ENCODE measurements at regions of chr5 and their contacts with region 1.

Region 1: DNA sequence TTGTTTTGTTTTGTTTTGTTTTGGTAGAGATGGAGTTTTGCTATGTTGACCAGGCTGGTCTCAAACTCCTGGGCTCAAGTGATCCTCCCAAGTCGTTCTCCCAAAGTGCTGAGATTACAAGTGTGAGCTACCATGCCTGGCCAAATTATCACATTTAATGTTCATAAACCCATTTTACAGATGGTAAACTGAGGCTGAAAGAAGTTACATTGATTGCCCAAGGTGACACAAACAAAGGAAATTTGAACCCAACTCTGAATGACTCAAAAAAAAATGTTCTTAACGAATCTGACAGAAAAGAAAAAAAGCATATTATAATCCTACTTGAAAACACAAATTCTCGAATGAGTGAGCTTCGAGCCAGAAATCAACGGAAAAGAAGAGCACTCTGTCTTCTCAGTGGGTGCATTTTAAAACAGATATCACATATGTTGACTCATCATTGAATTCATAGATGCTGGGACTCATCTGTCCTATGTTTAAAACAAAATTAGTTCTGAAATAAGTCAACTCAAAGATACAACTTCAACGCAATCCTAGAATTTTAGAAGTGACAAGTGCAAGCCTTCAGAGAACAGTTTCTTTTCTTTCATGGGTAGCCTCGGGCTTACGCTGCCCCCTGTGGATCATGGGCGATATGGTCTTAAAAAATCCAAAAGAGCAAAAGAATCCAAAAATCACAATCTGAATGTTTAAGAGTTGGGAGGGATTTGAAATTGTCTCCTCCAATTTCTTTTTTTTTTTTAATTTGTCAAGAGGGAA is 28.4 kb downstream of the TIMD4 start:
- DNase-seq: peak; percentile 45 to 56 (median 50)
- H3K4me3 ChIP-seq: no peak overlapping the region
- H3K4me3 Mint-ChIP-seq: peak overlapping the region in 7 of 8 donors; percentile 49 to 69 (median 58)
- H3K27ac ChIP-seq: no peak overlapping the region
- H3K27ac Mint-ChIP-seq: peak overlapping the region in 5 of 7 donors; percentile 6 to 72 (median 30)
- H3K4me1 ChIP-seq: peaks cover under 1% of the 10 kb centered on the region
- H3K4me1 Mint-ChIP-seq: peaks cover 6 to 20% (median 12%) of the 10 kb centered on the region in 4 donors
- H3K27me3 ChIP-seq: no peaks in the 10 kb centered on the region
- H3K27me3 Mint-ChIP-seq: no peaks in the 10 kb centered on the region

Region 2: DNA sequence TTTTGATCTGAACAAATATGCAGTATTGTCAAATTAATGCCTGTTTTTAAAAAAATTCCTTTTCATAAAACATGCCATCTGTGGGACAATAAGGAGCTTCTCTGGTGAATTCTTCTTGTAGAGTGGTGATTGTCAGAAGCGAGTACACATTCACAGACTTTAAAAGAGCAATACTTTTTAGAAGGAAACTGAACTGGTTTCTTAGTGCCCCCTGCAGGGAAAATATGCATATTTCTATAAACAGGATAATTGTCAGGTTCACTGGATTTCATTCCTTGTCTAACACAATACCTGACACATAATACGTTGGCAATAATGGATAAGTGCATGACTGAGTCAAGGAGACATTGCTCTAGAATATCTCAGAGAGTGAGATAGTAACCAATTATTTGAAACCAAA is 1787.4 kb before region 1 on chr5:
- CTCF ChIA-PET with region 1: no interaction called
- POLR2A ChIA-PET with region 1: no interaction called
- intact Hi-C with region 1: loop called (anchors 10 kb)
- DNase-seq: no peak
- H3K4me3 ChIP-seq: no peak overlapping the region
- H3K4me3 Mint-ChIP-seq: no peak overlapping the region
- H3K27ac ChIP-seq: no peak overlapping the region
- H3K27ac Mint-ChIP-seq: no peak overlapping the region
- H3K4me1 ChIP-seq: no peaks in the 10 kb centered on the region
- H3K4me1 Mint-ChIP-seq: peaks cover 0 to 8% (median under 1%) of the 10 kb centered on the region in 4 donors
- H3K27me3 ChIP-seq: no peaks in the 10 kb centered on the region
- H3K27me3 Mint-ChIP-seq: peaks cover 0 to 8% of the 10 kb centered on the region in 2 donors

Region 3: DNA sequence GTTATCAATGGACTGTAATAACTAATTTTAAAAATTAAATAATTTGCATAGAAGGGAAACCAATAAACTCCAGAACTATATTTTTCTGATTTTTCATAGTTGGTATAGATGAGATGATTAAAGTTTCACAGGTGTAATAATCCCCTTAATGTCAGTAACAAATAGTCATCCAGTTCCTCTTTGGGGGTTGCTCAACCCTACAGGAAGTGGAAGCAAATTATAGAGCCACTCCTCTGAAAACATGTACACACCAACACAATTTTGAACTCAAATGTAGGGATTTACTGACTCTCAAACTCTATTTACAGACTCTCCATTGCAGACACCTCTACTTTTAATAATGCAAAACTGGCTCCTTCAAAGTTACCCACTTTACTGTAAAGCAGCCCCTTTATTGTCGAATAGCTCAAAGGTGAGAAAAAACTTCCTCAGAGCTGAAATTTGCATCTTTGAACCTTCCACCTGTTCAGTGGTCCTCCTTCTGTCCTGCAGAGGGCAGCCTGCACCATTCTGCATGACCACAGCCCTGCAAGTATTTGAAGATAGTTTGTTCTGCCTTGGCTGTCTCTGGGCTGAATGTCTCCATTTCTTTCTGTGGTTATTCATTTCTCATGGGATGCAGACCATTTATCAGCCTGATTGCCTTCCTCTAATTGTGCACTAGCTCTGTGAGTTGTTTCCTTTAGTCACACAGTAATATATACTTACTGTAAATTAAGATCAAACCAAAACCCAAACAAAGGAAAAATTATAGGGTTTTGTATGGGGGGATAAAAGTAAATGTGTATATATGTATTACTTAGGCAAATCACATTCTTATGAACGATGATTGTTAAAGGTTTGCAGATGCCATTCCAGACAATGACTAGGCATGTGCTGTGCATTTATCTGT is 990.9 kb before region 1 on chr5:
- CTCF ChIA-PET with region 1: no interaction called
- POLR2A ChIA-PET with region 1: no interaction called
- intact Hi-C with region 1: loop called (anchors 2 kb)
- DNase-seq: peak; percentile 4 to 43 (median 10)
- H3K4me3 ChIP-seq: no peak overlapping the region
- H3K4me3 Mint-ChIP-seq: no peak overlapping the region
- H3K27ac ChIP-seq: no peak overlapping the region
- H3K27ac Mint-ChIP-seq: peak overlapping the region in 1 of 7 donors; percentile 12
- H3K4me1 ChIP-seq: no peaks in the 10 kb centered on the region
- H3K4me1 Mint-ChIP-seq: peaks cover 0 to 3% (median 0%) of the 10 kb centered on the region in 4 donors
- H3K27me3 ChIP-seq: no peaks in the 10 kb centered on the region
- H3K27me3 Mint-ChIP-seq: peaks cover 0 to 2% of the 10 kb centered on the region in 2 donors

Region 4: GRCh38 chr5:156698323-156698722 is 236.3 kb before region 1 on chr5:
- CTCF ChIA-PET with region 1: no interaction called
- POLR2A ChIA-PET with region 1: no interaction called
- intact Hi-C with region 1: no loop called
- DNase-seq: no peak
- H3K4me3 ChIP-seq: no peak overlapping the region
- H3K4me3 Mint-ChIP-seq: no peak overlapping the region
- H3K27ac ChIP-seq: no peak overlapping the region
- H3K27ac Mint-ChIP-seq: no peak overlapping the region
- H3K4me1 ChIP-seq: no peaks in the 10 kb centered on the region
- H3K4me1 Mint-ChIP-seq: no peaks in the 10 kb centered on the region
- H3K27me3 ChIP-seq: no peaks in the 10 kb centered on the region
- H3K27me3 Mint-ChIP-seq: peaks cover 5 to 11% of the 10 kb centered on the region in 2 donors

Region 5: DNA sequence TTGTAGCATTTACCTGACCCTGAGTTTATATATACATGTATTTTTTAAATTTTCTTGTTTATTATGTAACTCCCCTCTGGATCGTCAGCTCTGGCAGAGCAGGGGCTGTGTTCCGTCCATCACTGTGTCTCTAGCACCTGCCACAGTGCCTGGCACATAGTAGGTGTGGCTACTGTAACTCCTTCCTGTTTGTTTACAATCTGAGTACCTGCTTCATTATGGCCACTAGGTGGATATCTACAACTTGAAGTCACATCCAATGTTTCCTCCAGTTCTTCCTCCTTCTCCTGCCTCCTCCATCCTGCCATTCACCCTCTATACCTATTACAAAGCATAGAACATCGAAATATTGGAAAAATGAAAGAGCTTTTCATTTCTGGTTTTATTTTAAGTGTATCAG is 98.7 kb before region 1 on chr5:
- CTCF ChIA-PET with region 1: interaction called, 10 read pairs
- POLR2A ChIA-PET with region 1: no interaction called
- intact Hi-C with region 1: loop called (anchors 5 kb)
- DNase-seq: no peak
- H3K4me3 ChIP-seq: no peak overlapping the region
- H3K4me3 Mint-ChIP-seq: no peak overlapping the region
- H3K27ac ChIP-seq: no peak overlapping the region
- H3K27ac Mint-ChIP-seq: peak overlapping the region in 1 of 7 donors; percentile 4
- H3K4me1 ChIP-seq: no peaks in the 10 kb centered on the region
- H3K4me1 Mint-ChIP-seq: no peaks in the 10 kb centered on the region
- H3K27me3 ChIP-seq: no peaks in the 10 kb centered on the region
- H3K27me3 Mint-ChIP-seq: peaks cover 1 to 3% of the 10 kb centered on the region in 2 donors

Region 6: DNA sequence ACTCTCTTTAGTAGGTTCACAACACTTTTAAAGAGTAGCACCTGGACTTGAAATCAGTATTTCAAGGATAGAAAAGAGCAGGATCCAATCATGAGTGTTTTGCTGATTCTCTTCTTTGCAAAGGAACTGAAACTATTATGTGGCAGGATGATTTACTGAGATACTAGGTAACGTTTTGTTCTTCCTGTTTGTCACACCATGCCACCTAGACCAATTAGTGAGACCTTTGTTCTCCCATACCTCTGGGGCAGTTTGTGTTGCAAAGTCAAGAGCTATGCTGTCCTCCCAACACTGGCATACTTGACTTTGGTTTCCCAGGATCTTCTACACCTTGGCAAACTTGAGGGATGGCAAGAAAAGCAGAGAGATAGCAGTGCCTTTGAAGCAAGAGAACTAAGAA is 41.1 kb before region 1 on chr5:
- CTCF ChIA-PET with region 1: interaction called, 27 read pairs
- POLR2A ChIA-PET with region 1: no interaction called
- intact Hi-C with region 1: loop called (anchors 1 kb)
- DNase-seq: no peak
- H3K4me3 ChIP-seq: no peak overlapping the region
- H3K4me3 Mint-ChIP-seq: no peak overlapping the region
- H3K27ac ChIP-seq: no peak overlapping the region
- H3K27ac Mint-ChIP-seq: peak overlapping the region in 1 of 7 donors; percentile 11
- H3K4me1 ChIP-seq: peaks cover 8% of the 10 kb centered on the region
- H3K4me1 Mint-ChIP-seq: peaks cover 9 to 27% (median 19%) of the 10 kb centered on the region in 4 donors
- H3K27me3 ChIP-seq: no peaks in the 10 kb centered on the region
- H3K27me3 Mint-ChIP-seq: peaks cover 0 to 1% of the 10 kb centered on the region in 2 donors

Region 7: DNA sequence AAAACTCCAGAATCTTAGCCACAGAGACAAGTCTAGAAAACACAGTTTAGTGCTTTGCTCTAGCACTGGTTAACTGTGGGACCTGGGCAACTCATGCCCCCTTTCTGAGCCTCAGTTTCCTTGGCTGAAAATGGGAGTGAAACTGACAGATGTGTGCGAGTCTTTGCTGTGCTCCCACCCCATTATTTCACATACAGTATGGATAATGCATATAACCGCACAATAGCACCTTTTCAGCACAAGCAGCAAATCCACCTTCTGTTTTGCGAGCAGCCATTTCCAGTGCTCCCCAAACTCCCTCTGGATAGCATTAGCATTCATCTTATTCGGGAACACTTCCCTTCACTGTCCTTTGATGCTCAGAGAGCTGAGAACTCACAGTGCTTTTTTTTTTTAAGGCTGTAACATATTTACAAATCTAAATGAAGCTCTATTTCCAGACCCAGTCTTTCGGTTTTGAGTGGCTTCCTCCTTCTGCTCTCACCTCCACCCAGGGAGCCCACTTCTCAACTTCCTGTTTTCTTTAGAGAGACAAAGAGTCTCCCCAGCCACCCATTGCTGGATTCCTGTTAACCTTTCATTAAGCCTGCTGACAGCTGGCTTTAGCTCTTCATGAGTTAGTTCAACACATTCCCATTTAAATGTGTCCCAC is 20.8 kb before region 1 on chr5:
- CTCF ChIA-PET with region 1: interaction called, 25 read pairs
- POLR2A ChIA-PET with region 1: interaction called, 4 read pairs
- intact Hi-C with region 1: no loop called
- DNase-seq: peak; percentile 34 to 43 (median 36)
- H3K4me3 ChIP-seq: peak overlapping the region in 1 of 2 donors; percentile 18
- H3K4me3 Mint-ChIP-seq: peak overlapping the region; percentile 76 to 90 (median 80)
- H3K27ac ChIP-seq: peak overlapping the region; percentile 36
- H3K27ac Mint-ChIP-seq: peak overlapping the region; percentile 82 to 95 (median 92)
- H3K4me1 ChIP-seq: peaks cover 28% of the 10 kb centered on the region
- H3K4me1 Mint-ChIP-seq: peaks cover 24 to 52% (median 38%) of the 10 kb centered on the region in 4 donors
- H3K27me3 ChIP-seq: no peaks in the 10 kb centered on the region
- H3K27me3 Mint-ChIP-seq: no peaks in the 10 kb centered on the region

Region 8: DNA sequence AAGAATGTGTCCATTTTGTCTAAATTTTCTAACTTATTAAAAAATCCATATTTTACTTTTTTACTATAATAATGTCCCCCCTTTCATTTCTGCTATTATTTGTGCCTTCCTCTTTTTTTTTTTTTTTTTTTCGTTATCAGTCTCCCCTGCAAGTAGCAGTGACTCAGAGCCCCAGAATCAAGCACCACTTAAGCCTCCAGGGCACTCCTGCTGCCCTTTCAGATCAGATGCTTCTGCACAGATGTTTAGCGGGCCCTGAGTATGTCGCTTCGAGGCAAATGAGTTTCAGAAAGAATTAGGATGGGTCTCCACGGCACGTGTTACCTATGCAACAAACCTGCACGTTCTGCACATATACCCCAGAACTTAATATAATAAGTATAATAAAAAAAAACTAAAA is 196.3 kb after region 1 on chr5:
- CTCF ChIA-PET with region 1: interaction called, 17 read pairs
- POLR2A ChIA-PET with region 1: no interaction called
- intact Hi-C with region 1: loop called (anchors 10 kb)
- DNase-seq: no peak
- H3K4me3 ChIP-seq: no peak overlapping the region
- H3K4me3 Mint-ChIP-seq: no peak overlapping the region
- H3K27ac ChIP-seq: no peak overlapping the region
- H3K27ac Mint-ChIP-seq: no peak overlapping the region
- H3K4me1 ChIP-seq: no peaks in the 10 kb centered on the region
- H3K4me1 Mint-ChIP-seq: peaks cover 6 to 21% (median 9%) of the 10 kb centered on the region in 4 donors
- H3K27me3 ChIP-seq: no peaks in the 10 kb centered on the region
- H3K27me3 Mint-ChIP-seq: no peaks in the 10 kb centered on the region